ENCODE measurements at regions of chr2 and their contacts with region 1.

Region 1: DNA sequence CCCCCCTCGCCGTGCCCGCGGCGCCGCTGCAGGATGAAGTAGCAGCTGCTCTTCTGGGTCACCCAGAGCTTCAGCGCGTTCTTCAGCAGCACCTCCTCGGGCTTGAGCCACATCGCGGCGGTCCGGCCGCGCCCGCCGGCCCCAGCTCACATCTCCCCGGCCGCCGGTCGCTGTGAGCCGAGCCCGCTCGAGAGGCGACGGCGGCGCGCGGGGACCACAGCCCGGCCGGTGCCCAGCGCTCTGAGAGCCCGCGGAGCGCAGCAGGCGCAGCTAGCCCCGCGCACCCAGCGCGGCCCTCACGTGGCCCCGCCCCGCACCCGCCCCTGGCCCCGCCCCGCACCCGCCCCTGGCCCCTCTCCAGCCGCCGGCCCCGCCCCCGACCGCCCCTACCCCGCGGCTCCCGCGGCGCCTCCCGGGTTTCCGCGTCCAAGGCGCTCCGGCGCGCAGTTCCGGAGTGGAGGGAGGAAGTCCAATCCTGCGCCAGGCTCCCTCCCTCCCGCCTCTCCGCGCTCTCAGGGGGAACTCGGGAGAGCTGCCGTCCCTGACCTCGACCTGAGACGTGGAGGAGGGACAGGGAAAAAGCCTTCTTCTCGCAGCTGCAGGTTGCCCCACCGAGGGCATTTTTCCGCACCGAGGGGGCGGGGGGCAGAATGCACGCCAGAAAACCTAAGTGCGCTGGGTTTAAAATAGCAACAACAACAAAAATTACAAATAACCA is at the start of gene TBC1D8:
- DNase-seq: peak; percentile 96
- total RNA-seq, gene TBC1D8: 13.5 to 13.9 TPM

Region 2: GRCh38 chr2:101001691-101002561 is 149.4 kb before region 1 on chr2 and contains the start of gene RPL31:
- intact Hi-C with region 1: loop called in 1 of 2 experiments (anchors 10 kb)
- DNase-seq: peak; percentile 99
- total RNA-seq, gene RPL31: 1,083 to 1,087 TPM

Region 3: GRCh38 chr2:101012706-101013181 is 138.6 kb before region 1 on chr2:
- intact Hi-C with region 1: loop called (anchors 5 to 10 kb)
- DNase-seq: no peak

Region 4: DNA sequence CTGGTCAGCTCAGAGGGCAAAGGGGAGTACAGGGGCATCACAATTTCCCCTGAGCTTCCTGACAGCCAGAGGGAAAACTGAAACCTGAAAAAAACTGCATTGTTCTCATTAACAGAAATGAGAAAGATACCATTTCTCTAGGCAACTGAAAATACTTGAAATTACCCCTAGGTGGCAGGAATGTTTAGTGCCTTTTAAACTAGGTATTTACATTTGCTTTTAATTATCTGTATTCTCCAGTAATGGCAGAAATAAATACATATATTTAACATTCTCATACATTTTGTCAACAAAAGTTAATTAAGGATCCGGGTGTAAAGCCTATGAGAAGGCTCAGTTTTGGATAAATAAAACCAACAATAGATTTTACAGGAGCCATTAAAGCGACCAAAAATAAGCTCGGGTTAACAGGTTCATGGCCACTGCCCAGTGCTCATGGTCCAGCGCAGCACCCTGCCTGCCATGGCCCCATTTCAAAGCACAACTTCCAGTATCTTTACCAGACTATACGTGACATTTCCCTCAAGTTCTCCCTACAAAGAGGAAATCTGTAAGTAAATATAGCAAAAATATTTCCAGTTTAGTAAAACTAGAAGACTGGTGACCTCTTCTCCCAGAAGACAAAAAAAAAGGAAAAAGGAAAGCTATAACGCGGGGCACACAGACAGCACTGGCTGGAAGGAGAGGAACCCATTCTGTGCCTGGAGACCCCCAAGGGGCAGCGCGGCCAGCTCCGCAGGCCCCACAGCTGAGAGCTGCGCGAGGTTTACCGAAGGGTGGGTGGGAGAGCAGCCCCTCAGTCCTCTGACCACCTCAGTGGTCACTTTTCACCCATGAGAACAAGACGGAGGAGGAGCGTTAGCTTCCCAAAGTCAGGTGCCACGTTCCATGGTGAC is 114.5 kb before region 1 on chr2:
- intact Hi-C with region 1: loop called (anchors 5 to 10 kb)
- DNase-seq: no peak

Region 5: GRCh38 chr2:101173707-101174295 is 22.5 kb after region 1 on chr2:
- intact Hi-C with region 1: no loop called
- DNase-seq: peak; percentile 28

Region 6: DNA sequence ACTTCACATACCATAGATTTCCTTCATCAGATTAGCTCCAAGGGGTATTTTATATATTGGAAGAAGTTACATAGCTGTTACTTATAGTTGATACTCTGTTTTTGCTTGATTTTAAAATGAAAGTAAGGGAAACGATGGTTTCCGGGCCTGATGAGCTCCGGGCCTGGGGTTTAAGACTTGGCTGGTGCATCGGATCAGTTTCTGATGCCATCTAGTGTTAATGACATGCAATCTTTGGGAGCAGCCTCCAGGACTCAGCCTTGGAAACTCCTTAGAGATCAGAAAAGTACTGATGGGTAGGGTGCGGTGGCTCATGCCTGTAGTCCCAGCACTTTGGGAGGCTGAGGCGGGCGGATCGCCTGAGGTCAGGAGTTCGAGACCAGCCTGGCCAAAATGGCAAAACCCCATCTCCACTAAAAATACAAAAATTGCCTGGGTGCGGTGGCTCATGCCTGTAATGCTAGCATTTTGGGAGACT is 54.3 kb after region 1 on chr2:
- intact Hi-C with region 1: no loop called
- DNase-seq: no peak

Region 7: DNA sequence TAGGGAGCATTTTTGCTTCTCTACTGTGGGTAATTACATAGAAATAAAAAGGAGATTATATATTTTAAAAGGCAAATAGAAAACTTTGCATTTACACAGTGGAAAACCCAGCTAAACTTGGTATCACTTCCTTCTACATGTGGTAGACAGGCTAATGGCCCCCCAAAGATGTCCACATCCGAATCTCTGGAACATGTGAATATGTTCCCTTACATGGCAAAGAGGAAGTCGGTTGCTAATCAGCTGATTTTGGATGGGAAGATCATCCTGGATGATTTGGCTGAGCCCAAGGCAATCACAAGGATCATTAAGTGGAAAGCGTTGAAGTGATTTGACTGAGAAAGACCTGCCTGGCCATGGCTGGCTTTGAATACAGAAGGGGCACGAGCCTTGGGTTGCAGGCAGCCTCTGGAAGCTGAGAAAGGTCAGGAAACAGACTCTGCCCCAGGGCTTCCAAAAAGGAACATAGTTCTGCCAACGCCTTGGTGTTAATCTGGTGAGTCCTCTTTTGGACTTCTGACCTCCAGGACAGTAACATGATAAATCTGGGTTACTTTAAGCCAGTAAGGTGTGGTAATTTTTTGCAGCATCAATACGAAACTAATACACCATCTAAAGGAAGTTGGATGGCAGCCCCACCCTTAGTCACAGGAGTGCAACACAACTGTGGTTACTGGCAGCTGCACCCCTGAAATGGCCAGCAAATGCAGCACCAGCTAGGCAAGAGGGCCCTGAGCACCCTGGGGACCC is 210.0 kb after region 1 on chr2:
- intact Hi-C with region 1: no loop called
- DNase-seq: no peak

Measured in posterior vena cava (tissue), 2 donors.